Gastrocnemius medialis (tissue), 4 donors: ENCODE measurements at regions of chr18 and their contacts with region 1.

Region 1: DNA sequence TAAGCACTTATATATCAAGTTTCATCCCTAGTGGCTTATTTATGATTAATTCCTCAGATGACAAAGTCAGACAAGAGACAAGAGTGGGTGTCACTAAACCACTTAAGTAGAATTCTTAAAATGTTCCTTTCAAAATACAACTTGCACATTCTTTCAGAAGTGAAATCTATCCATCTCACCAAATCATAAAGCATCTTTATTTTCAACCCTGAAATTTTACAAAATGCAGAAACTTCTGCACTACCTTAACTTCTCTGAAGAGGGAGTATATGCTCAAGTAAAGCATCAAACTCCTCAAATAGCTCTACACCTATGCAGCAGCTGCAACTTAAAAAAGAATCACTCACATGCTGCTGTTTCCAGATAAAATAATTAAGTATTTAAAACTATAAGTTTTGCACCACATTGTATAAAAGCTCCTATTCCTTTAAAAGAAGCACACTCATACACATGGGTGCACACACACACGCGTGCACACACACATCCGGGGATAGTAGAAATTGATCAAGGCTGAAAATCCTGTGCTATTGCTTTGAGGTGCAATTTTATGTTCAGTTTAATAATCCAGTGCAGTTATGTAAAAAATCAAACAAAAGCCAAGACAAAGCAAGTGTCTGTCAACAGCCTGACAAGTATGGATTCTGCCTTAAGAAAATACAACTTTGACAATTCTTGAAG is 244.5 kb downstream of the TCF4 start:
- DNase-seq: no peak
- ATAC-seq: peak; percentile 55 to 68
- H3K4me3 ChIP-seq: no peak overlapping the region
- H3K27ac ChIP-seq: peak overlapping the region in 3 of 4 donors; percentile 15 to 28 (median 26)
- H3K4me1 ChIP-seq: peaks cover 16 to 28% of the 10 kb centered on the region in 2 donors
- H3K27me3 ChIP-seq: no peaks in the 10 kb centered on the region
- CTCF ChIP-seq: peak in 4 of 5 experiments; percentile 54 to 65 (median 60)
- POLR2A ChIP-seq: no peak

Region 2: GRCh38 chr18:55110436-55110835 is 233.1 kb before region 1 on chr18:
- in situ Hi-C with region 1: no loop called
- intact Hi-C with region 1: no loop called
- DNase-seq: peak in 1 of 2 donors; percentile 13
- ATAC-seq: peak; percentile 78 to 83
- H3K4me3 ChIP-seq: no peak overlapping the region
- H3K27ac ChIP-seq: peak overlapping the region; percentile 62 to 74 (median 70)
- H3K4me1 ChIP-seq: peaks cover 3 to 7% of the 10 kb centered on the region in 2 donors
- H3K27me3 ChIP-seq: no peaks in the 10 kb centered on the region
- CTCF ChIP-seq: no peak
- POLR2A ChIP-seq: no peak

Region 3: GRCh38 chr18:56563568-56563967 is 1220.0 kb after region 1 on chr18:
- in situ Hi-C with region 1: loop called in 1 of 4 experiments (anchors 25 kb)
- intact Hi-C with region 1: no loop called
- DNase-seq: no peak
- ATAC-seq: no peak
- H3K4me3 ChIP-seq: no peak overlapping the region
- H3K27ac ChIP-seq: peak overlapping the region in 3 of 4 donors; percentile 5 to 63 (median 33)
- H3K4me1 ChIP-seq: no peaks in the 10 kb centered on the region
- H3K27me3 ChIP-seq: no peaks in the 10 kb centered on the region
- CTCF ChIP-seq: no peak
- POLR2A ChIP-seq: no peak